GM12878 (cell line): ENCODE measurements at regions of chr18 and their contacts with region 1.

Region 1: GRCh38 chr18:9334329-9334972 is at the start of gene TWSG1:
- DNase-seq: peak; percentile 62
- ATAC-seq: peak; percentile 95
- H3K4me3 ChIP-seq: peak within 1 kb of the TSS; percentile 89
- H3K27ac ChIP-seq: peak within 1 kb of the TSS; percentile 36
- H3K4me1 ChIP-seq: peaks cover 5% of the 10 kb centered on the region; the same call in 1 of the 2 replicates
- H3K27me3 ChIP-seq: no peaks in the 10 kb centered on the region
- CTCF ChIP-seq: peak in 2 of 3 experiments; percentile 49 to 64; a peak in 3 of 6 replicates
- EP300 ChIP-seq: no peak
- POLR2A ChIP-seq: peak; percentile 78
- RAD21 ChIP-seq: peak; percentile 46
- polyA plus RNA-seq, gene TWSG1: 11.1 to 11.4 TPM

Region 2: DNA sequence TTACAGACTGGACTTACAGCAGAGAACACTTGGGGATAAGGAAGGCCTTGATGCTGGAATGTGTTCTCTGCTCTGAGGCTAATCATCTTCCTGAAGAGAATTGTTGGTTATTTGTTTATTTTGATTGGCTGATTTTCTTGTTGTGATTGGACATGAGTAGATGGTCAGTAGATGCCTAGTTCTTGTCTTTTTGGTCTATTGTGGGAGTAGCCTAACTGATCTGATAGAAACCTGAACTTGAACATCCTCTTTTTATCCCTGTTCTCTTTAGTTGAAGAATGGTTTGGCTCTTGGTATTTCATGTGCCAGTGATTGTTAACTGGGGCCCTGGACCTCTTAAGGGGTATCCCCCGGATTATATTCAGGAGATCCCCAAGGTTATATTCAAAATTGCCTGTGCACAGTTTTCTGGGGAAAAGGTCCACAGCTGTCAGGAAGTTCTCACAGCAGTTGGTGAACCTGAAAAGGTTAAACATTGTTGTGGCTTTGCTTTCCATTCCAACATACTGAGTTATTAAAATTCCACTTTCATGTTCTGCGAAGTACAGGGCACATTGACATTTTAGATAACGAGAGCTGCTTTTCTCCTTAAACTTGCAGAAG is 13.7 kb after region 1 on chr18:
- CTCF ChIA-PET with region 1: interaction called, 9 read pairs
- POLR2A ChIA-PET with region 1: interaction called, 6 read pairs
- RAD21 ChIA-PET with region 1: interaction called, 15 read pairs
- SMC1A ChIA-PET with region 1: interaction called, 63 read pairs
- in situ Hi-C with region 1: no loop called
- intact Hi-C with region 1: loop called (anchors 2 kb)
- DNase-seq: peak; percentile 60
- ATAC-seq: peak; percentile 67
- H3K4me3 ChIP-seq: no peak overlapping the region
- H3K27ac ChIP-seq: peak overlapping the region; percentile 67
- H3K4me1 ChIP-seq: peaks cover 20% of the 10 kb centered on the region
- H3K27me3 ChIP-seq: no peaks in the 10 kb centered on the region
- CTCF ChIP-seq: no peak
- EP300 ChIP-seq: no peak
- POLR2A ChIP-seq: no peak
- RAD21 ChIP-seq: no peak

Region 3: DNA sequence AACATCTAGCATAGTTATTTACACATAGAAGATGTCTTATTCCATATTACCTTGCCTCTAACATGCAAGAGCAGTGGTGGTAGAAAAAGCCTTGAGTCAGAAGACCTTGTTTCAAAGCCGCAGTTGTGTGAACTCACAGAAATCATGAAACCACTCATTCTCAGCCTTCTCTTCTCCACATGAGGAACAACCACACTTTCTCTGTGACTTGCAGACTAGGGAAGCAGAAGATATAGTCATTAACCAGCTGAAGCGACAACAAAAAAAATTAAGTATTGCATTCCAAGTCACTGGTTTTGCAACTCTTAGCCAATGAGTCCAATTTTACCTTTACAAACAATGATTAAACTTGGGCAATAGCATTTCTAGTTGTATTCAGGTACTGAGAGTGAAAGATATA is 19.1 kb after region 1 on chr18:
- CTCF ChIA-PET with region 1: interaction called, 10 read pairs
- POLR2A ChIA-PET with region 1: interaction called, 9 read pairs
- RAD21 ChIA-PET with region 1: interaction called, 15 read pairs
- SMC1A ChIA-PET with region 1: interaction called, 63 read pairs
- in situ Hi-C with region 1: no loop called
- intact Hi-C with region 1: loop called (anchors 2 kb)
- DNase-seq: peak; percentile 88
- ATAC-seq: peak; percentile 92
- H3K4me3 ChIP-seq: no peak overlapping the region
- H3K27ac ChIP-seq: peak overlapping the region; percentile 75
- H3K4me1 ChIP-seq: peaks cover 26% of the 10 kb centered on the region
- H3K27me3 ChIP-seq: no peaks in the 10 kb centered on the region
- CTCF ChIP-seq: no peak
- EP300 ChIP-seq: peak in 1 of 2 experiments; percentile 43; a peak in 1 of 4 replicates
- POLR2A ChIP-seq: no peak
- RAD21 ChIP-seq: no peak